Activated naive CD4-positive, alpha-beta T cell treated with anti-CD3 and anti-CD28 coated beads, Interleukin-2, amount 10 ng/mL, durations not matched to agents 7 days and 5 days (primary cell): ENCODE measurements at regions of chr12 and their contacts with region 1.

Region 1: GRCh38 chr12:15220994-15221885 is at the start of gene RERG:
- DNase-seq: peak; percentile 78
- H3K4me3 Mint-ChIP-seq: peak within 1 kb of the TSS; percentile 39
- H3K27ac Mint-ChIP-seq: no peak within 1 kb of the TSS
- H3K4me1 Mint-ChIP-seq: peaks cover 3% of the 10 kb centered on the region
- H3K27me3 Mint-ChIP-seq: peaks cover 19% of the 10 kb centered on the region

Region 2: GRCh38 chr12:14723763-14724162 is 497.5 kb before region 1 on chr12:
- CTCF ChIA-PET with region 1: interaction called, 13 read pairs
- DNase-seq: peak; percentile 73
- H3K4me3 Mint-ChIP-seq: no peak overlapping the region
- H3K27ac Mint-ChIP-seq: no peak overlapping the region
- H3K4me1 Mint-ChIP-seq: peaks cover 3% of the 10 kb centered on the region
- H3K27me3 Mint-ChIP-seq: peaks cover 17% of the 10 kb centered on the region

Region 3: DNA sequence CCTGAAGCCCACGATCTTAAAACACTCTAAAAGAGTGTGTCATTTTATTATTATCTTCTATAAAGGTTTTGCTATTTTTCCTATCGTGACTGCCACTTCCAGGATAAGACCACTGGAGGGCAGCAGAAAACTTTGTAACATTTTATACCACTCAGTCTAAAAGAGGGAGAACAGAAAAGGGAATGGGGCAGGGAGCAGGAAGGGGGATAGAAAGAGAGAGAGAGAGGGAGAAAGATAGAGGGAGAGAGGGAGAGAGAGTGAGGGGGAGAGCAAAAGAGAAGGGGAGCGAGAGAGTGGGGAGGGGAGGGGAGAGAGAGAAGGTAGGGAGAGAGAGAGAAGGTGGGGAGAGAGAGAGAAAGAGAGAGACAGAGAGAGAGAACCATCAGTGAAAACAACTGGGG is 375.9 kb before region 1 on chr12:
- CTCF ChIA-PET with region 1: interaction called, 14 read pairs
- DNase-seq: peak; percentile 52
- H3K4me3 Mint-ChIP-seq: no peak overlapping the region
- H3K27ac Mint-ChIP-seq: no peak overlapping the region
- H3K4me1 Mint-ChIP-seq: peaks cover 2% of the 10 kb centered on the region
- H3K27me3 Mint-ChIP-seq: peaks cover 8% of the 10 kb centered on the region

Region 4: GRCh38 chr12:15522565-15523187 is 301.4 kb after region 1 on chr12:
- CTCF ChIA-PET with region 1: interaction called, 13 read pairs
- DNase-seq: no peak
- H3K4me3 Mint-ChIP-seq: no peak overlapping the region
- H3K27ac Mint-ChIP-seq: no peak overlapping the region
- H3K4me1 Mint-ChIP-seq: peaks cover 11% of the 10 kb centered on the region
- H3K27me3 Mint-ChIP-seq: peaks cover 26% of the 10 kb centered on the region

Region 5: GRCh38 chr12:15538881-15539280 is 317.6 kb after region 1 on chr12:
- CTCF ChIA-PET with region 1: no interaction called
- DNase-seq: no peak
- H3K4me3 Mint-ChIP-seq: no peak overlapping the region
- H3K27ac Mint-ChIP-seq: no peak overlapping the region
- H3K4me1 Mint-ChIP-seq: peaks cover 28% of the 10 kb centered on the region
- H3K27me3 Mint-ChIP-seq: no peaks in the 10 kb centered on the region